ENCODE measurements at regions of chr14 and their contacts with region 1.

Region 1: DNA sequence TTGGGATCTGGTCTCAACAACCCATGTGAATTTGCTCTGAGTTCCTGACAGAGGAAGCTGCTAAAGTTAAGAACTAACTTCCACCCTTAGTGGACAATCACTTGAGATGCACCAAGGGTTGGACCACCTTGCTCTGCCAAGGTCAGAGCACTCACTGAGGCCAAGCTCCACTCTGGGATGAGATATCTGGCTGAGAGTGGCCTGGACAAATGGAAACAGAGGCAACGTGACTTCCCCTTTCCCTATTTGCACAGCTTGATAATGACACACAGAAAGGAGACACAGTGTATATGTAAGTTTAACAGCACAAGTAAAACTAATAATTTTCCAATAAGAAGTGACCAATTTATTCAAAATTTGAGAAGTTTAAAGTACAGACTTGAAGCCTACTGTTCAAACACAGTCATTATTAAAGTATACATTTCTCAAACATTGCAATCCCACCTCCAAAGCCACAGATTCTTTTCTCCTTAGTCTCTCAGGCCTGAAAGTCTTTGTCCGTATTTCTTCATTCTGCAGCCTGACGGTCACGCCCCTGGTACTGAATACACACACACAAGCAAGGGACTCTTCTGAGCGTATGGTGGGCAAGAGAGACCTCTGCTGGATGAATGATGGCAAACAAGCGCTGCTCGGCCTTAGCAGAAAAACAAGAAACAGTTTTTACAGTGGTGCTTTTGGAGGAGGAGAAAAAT is 28.6 kb downstream of the TMEM30B start:
- DNase-seq: peak; percentile 71 to 73
- H3K4me3 ChIP-seq: no peak overlapping the region
- H3K4me1 ChIP-seq: no peaks in the 10 kb centered on the region; the same call in 1 of the 2 replicates
- H3K27me3 ChIP-seq: no peaks in the 10 kb centered on the region; the same call in 1 of the 2 replicates

Region 2: DNA sequence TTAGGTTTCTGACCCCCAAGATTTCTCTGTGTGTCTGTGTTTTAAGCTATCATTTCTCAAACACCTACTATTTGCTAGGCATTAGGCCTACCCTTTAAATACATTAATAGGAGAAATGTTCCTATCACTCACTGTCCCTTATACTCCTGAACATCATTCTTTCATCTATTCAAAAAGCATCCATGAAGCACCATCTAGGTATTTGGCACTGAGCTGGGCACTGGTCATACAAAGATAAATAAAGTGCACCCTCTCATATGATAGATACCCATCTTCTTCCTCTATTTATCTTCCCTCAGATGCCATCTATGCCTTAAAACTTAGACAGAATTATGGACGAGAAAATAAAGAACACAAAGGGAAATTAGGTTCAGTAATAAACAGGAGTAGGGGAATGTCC is 623.6 kb before region 1 on chr14:
- in situ Hi-C with region 1: loop called (anchors 5 kb)
- DNase-seq: no peak
- H3K4me3 ChIP-seq: no peak overlapping the region
- H3K4me1 ChIP-seq: peaks cover 3% of the 10 kb centered on the region; the same call in 1 of the 2 replicates
- H3K27me3 ChIP-seq: no peaks in the 10 kb centered on the region